ENCODE measurements at regions of chr12 and their contacts with region 1.

Region 1: DNA sequence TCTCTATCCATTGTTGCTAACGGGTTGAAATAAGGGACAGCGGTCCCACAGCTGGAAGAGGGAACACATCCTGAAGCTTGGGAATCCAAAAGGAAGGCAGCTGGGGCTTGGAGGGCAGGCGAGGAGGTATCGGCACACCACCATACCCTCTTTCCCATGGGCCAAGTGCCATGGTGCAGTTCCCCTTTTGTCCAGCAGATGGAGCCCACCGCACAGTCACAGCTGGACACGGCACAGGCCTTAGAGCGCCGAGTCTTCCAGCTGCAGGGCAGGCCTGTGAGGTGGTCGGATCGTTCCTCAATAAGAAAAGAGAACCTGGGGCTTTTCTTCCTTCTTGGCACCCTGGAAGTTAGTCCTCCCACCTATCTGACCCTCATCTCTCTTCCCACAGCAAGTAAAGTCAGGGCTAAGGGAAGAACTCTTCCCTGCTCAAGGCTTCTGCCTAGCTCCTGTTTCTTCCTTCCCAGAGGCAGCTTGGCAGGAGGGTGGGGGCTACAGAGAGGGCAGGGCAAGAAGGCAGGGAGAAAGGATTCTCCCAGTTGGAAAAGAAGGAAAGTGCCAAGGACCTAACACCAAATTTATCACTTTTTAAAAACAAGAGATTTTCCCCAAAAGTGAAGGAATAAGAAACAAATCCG is 8.6 kb downstream of the PPP1R1A start:
- DNase-seq: peak; percentile 79
- H3K4me3 ChIP-seq: no peak overlapping the region; a peak in 1 of 4 replicates
- H3K27ac ChIP-seq: no peak overlapping the region
- H3K4me1 ChIP-seq: no peaks in the 10 kb centered on the region
- H3K27me3 ChIP-seq: peaks cover 66% of the 10 kb centered on the region
- CTCF ChIP-seq: peak; percentile 92
- EP300 ChIP-seq: no peak
- RAD21 ChIP-seq: peak; percentile 57

Region 2: DNA sequence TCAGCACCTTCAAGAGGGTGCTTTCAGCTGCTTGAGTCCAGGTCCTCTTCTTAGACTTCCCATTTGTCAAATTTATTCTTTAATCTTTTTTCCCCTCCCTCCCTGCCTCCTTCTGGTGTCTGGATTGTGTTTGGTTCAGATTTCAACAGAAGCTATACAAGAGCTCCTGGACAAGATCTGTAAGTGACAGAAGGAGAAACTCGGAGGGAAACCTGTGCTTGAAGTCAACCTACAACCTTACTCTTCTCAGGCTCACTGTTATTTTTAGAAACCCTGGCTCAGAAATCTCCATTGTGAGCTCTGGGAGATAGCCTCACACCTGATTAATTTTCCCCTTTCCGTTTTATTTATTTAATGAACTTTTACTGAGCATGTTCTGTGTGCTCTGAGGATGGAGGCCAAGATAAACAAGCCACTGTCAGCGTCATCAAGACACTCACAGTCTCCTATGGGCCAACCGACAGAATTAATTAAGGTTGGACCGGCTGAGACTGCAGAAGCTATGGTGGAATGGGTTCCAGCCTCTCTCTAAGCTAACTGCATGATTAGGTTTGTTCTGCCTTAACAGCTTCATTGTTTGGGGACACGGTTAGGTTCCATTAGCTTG is 17.0 kb before region 1 on chr12:
- CTCF ChIA-PET with region 1: interaction called, 50 read pairs
- POLR2A ChIA-PET with region 1: no interaction called
- DNase-seq: no peak
- H3K4me3 ChIP-seq: no peak overlapping the region
- H3K27ac ChIP-seq: no peak overlapping the region
- H3K4me1 ChIP-seq: no peaks in the 10 kb centered on the region; a peak in 1 of 4 replicates
- H3K27me3 ChIP-seq: peaks cover 35% of the 10 kb centered on the region
- CTCF ChIP-seq: no peak
- EP300 ChIP-seq: no peak
- RAD21 ChIP-seq: no peak

Region 3: GRCh38 chr12:54596526-54596946 is 16.7 kb after region 1 on chr12:
- CTCF ChIA-PET with region 1: interaction called, 28 read pairs
- POLR2A ChIA-PET with region 1: no interaction called
- DNase-seq: peak; percentile 61
- H3K4me3 ChIP-seq: no peak overlapping the region
- H3K27ac ChIP-seq: no peak overlapping the region
- H3K4me1 ChIP-seq: no peaks in the 10 kb centered on the region
- H3K27me3 ChIP-seq: peaks cover 67% of the 10 kb centered on the region; the same call in 1 of the 2 replicates
- CTCF ChIP-seq: peak; percentile 85
- EP300 ChIP-seq: no peak
- RAD21 ChIP-seq: peak; percentile 32; the same call in 1 of the 2 replicates

Region 4: GRCh38 chr12:54603173-54603814 is 23.5 kb after region 1 on chr12:
- CTCF ChIA-PET with region 1: interaction called, 15 read pairs
- POLR2A ChIA-PET with region 1: no interaction called
- DNase-seq: peak; percentile 62
- H3K4me3 ChIP-seq: no peak overlapping the region; a peak in 1 of 4 replicates
- H3K27ac ChIP-seq: no peak overlapping the region
- H3K4me1 ChIP-seq: no peaks in the 10 kb centered on the region; a peak in 1 of 4 replicates
- H3K27me3 ChIP-seq: peaks cover 22% of the 10 kb centered on the region; the same call in 1 of the 2 replicates
- CTCF ChIP-seq: peak; percentile 86
- EP300 ChIP-seq: no peak
- RAD21 ChIP-seq: peak; percentile 29; the same call in 1 of the 2 replicates

Region 5: DNA sequence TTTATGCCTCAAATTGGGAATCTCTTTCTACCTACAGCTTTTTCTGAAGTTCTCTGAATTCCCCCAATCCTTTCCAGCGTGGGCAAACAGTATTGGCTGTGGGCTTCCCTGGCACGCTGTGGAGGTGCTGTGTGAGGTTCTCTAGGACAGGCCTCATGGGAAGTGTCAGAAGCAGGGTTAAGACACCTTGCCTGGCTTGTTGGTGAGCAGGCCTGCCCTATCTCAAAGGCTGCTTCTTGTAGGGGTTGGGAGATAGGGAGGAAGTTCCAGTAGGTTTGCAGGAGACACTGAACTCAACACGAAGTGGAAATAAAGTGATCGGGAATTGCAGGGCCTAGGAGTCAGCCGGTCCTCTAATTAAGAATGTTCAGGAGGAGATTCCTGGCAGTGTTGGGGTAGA is 98.3 kb after region 1 on chr12:
- CTCF ChIA-PET with region 1: no interaction called
- POLR2A ChIA-PET with region 1: no interaction called
- DNase-seq: no peak
- H3K4me3 ChIP-seq: no peak overlapping the region
- H3K27ac ChIP-seq: no peak overlapping the region
- H3K4me1 ChIP-seq: no peaks in the 10 kb centered on the region
- H3K27me3 ChIP-seq: peaks cover 8% of the 10 kb centered on the region; the same call in 1 of the 2 replicates
- CTCF ChIP-seq: no peak
- EP300 ChIP-seq: no peak
- RAD21 ChIP-seq: no peak

Measured in SK-N-SH (cell line).